HCT116 (cell line): ENCODE measurements at regions of chr13 and their contacts with region 1.

Region 1: DNA sequence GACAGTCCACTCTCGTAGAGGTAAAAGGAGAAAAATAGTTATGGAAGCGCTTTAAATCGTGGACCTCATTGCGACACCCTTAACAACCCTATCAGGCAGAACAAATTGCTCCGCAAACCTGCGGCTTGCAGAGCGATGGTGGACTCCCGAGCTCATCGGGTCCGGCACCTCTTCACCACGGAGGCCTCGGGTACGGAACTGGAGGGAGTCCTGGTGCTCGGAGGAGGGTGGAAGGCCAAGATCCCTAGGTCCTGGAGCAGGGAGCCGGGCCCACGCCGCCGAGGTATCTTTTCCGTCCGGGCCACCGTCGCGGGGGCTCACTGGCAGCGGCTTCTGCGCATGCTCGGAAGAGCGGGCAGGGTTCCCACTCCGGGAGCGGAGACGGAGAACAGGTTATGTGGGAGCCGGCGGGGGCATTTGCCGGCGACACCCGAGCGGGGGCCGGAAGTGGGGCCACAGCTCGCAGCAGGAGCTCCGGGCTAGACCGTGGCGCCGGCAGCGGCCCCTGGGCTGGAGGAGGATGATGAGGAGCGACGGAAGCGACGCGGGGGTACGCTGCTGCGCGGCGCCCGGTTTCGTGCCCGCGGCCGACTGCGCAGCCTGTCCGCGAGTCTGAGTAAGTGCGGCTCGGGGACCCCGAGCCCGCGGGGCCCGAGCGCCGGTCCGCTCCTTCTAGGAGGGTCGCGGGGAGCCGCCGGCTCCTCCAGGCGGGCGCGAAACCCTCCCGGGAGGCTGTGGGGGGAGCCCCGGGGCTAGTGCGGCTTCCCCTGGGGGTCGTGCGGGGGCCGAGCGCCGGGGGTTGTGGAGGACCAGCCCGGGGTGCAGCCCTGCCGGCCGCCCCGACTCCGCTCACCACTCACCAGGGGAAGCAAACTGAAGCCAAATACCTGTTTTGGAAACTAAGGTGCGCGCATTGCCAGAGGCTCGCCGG is at the start of gene ABHD13:
- DNase-seq: peak; percentile 84
- ATAC-seq: peak; percentile 75
- H3K4me3 ChIP-seq: peak within 1 kb of the TSS; percentile 69 to 83
- H3K27ac ChIP-seq: peak within 1 kb of the TSS; percentile 80
- H3K4me1 ChIP-seq: peaks cover 17 to 31% of the 10 kb centered on the region in 2 experiments
- H3K27me3 ChIP-seq: no peaks in the 10 kb centered on the region
- CTCF ChIP-seq: no peak
- POLR2A ChIP-seq: peak; percentile 74
- RAD21 ChIP-seq: no peak
- total RNA-seq, gene ABHD13: 4.1 TPM

Region 2: DNA sequence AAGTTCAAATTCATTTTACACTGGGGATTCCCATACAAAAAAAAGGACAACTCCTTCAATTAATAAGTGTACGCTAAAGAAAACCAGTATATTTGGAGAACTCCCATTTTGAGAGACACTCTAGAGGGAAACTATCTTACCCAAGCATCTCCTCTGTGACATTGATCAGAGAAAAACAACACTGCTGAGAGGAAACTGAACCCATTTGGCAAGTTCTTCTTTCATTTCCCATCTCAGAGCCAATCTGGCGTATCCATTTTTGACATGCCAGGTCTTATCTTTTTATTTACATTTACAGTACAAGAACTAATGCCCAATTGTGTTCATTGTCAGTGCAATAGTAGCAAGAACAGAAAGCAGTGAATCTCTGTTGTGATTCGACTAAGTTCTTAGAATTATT is 33.1 kb before region 1 on chr13:
- CTCF ChIA-PET with region 1: no interaction called
- POLR2A ChIA-PET with region 1: no interaction called
- RAD21 ChIA-PET with region 1: no interaction called
- intact Hi-C with region 1: no loop called
- DNase-seq: no peak
- ATAC-seq: no peak
- H3K4me3 ChIP-seq: no peak overlapping the region
- H3K27ac ChIP-seq: no peak overlapping the region
- H3K4me1 ChIP-seq: no peaks in the 10 kb centered on the region
- H3K27me3 ChIP-seq: peaks cover 5% of the 10 kb centered on the region; the same call in 1 of the 2 replicates
- CTCF ChIP-seq: no peak
- POLR2A ChIP-seq: no peak
- RAD21 ChIP-seq: no peak

Region 3: DNA sequence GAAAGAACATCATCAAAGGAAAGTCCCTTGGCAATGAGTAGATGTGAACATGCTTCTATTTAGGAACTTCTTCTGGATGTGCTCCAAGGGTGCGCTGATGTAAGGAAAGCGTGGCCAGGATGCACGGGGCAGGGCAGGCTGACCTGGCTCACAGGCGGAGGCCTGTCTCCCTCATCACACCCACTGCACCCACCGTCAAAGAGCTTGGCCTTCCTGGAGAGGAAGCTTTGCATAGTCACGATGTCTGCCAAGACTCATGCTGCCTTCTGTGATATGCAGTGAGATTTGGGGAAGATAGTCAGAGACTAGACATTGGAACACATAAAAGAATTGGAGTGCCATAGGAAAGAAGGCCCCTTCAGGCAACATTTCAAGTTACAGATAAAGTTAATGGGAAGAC is 493.1 kb after region 1 on chr13:
- CTCF ChIA-PET with region 1: no interaction called
- POLR2A ChIA-PET with region 1: no interaction called
- RAD21 ChIA-PET with region 1: no interaction called
- intact Hi-C with region 1: no loop called
- DNase-seq: no peak
- ATAC-seq: no peak
- H3K4me3 ChIP-seq: no peak overlapping the region
- H3K27ac ChIP-seq: no peak overlapping the region
- H3K4me1 ChIP-seq: no peaks in the 10 kb centered on the region
- H3K27me3 ChIP-seq: peaks cover 16% of the 10 kb centered on the region; the same call in 1 of the 2 replicates
- CTCF ChIP-seq: no peak
- POLR2A ChIP-seq: no peak
- RAD21 ChIP-seq: no peak

Region 4: DNA sequence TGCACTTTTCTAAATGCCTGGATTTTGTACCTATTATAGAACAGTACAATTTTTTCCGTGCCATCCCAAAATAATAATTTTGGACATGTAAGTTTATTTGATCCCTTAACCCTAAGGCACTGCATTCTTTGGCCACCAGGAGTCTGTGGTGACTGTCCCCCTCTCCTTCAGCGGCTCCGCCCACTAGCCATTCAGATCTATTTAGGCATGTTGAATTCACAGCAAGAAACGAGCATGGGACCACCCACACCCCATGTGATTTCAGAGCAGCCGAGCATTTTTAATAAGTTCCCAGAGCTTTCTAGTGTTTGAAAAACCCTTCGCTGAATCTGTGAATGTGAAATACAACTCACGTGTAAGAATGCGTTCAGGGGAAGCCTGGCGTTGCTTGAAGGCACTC is 978.6 kb after region 1 on chr13:
- CTCF ChIA-PET with region 1: no interaction called
- POLR2A ChIA-PET with region 1: no interaction called
- RAD21 ChIA-PET with region 1: no interaction called
- intact Hi-C with region 1: loop called (anchors 10 kb)
- DNase-seq: peak; percentile 38
- ATAC-seq: peak; percentile 94
- H3K4me3 ChIP-seq: no peak overlapping the region
- H3K27ac ChIP-seq: no peak overlapping the region
- H3K4me1 ChIP-seq: peaks cover 0 to 27% of the 10 kb centered on the region in 2 experiments; a peak in 2 of 4 replicates
- H3K27me3 ChIP-seq: no peaks in the 10 kb centered on the region
- CTCF ChIP-seq: peak in 2 of 3 experiments; percentile 60 to 64; a peak in 4 of 6 replicates
- POLR2A ChIP-seq: no peak
- RAD21 ChIP-seq: peak; percentile 25; the same call in 1 of the 2 replicates